Activated T-helper 1 cell treated with anti-CD3 and anti-CD28 coated beads, Interleukin-12 subunit alpha, Interleukin-12 subunit beta, Interleukin-2, Interleukin-4 antibody, amounts not matched to agents 30 ng/mL and 10 ng/mL and 1 ng/mL, durations not matched to agents 14 hours and 24 hours and 36 hours (primary cell): ENCODE measurements at regions of chr3 and their contacts with region 1.

Region 1: DNA sequence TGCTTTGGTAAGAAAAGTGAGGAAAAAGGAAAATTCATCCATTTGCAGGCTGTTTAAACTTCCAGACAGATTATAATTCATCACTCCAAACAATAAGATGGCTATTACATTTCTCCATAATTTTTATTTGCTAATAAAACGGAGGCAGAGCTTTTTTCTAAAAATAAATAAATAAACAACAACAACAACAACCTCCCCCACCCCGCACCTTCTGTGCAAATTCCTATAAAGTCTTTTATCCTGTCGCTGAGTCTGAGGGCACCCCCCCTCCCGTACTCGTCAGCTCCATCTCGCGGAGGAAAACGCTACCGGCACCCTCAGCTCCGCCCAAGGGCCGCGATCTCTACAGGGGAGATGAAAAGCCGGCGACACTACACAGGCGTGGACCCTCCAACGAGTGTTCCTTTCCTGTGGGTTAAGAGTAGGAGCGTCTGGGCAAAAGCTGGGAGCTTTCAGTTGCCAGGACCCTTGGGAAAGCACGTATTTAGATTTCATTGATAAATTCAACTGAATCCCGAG is 1.0 kb upstream of the ATP1B3 start:
- DNase-seq: peak; percentile 78
- H3K4me3 Mint-ChIP-seq: peak overlapping the region; percentile 92
- H3K27ac Mint-ChIP-seq: peak overlapping the region; percentile 90
- H3K4me1 Mint-ChIP-seq: peaks cover 30% of the 10 kb centered on the region
- H3K27me3 Mint-ChIP-seq: peaks cover 2% of the 10 kb centered on the region

Region 2: DNA sequence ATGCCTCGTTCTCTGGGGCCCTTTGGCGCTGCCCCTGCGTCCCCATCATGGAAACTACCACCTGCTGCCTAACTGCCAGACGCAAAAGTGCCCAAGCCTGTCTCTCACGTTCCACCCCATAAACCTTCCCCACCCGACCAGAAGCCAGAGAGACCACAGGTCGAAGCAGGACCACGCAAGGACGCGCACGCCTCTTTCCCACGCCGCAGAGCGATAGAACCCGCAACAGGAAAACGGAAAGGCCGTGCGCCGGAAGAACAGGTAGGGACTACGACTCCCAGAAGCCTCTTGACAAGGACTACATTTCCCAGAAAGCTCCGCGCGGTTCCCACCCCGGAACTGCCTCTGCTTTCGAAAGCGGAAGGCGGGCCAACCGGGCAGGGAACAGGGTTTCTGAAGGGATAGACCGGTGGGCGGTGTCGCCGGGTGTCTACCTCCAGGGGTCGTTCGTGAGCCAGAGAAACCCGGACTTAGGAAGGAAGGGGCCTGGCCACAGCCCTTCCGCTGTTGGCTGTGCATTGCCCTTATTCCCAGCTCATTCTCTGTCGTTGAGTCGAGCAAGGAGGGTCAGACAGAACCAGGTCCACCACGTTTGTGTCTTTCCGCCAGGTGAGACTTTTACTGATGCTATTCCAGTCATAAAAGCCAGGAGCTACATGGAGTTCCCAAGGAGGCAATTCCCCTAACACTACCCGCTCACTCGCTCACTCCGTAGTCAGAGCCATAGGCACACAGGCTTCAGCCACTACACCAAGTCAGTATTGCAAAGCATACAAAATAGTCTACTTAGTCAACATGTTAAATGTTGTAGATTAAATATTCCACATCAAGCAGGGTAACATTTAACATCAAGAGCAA is 563.7 kb before region 1 on chr3:
- intact Hi-C with region 1: loop called (anchors 1 kb)
- DNase-seq: peak; percentile 97
- H3K4me3 Mint-ChIP-seq: peak overlapping the region; percentile 95
- H3K27ac Mint-ChIP-seq: peak overlapping the region; percentile 98
- H3K4me1 Mint-ChIP-seq: peaks cover 51% of the 10 kb centered on the region
- H3K27me3 Mint-ChIP-seq: no peaks in the 10 kb centered on the region

Region 3: GRCh38 chr3:141487521-141488252 is 387.7 kb before region 1 on chr3:
- intact Hi-C with region 1: loop called (anchors 5 kb)
- DNase-seq: peak; percentile 85
- H3K4me3 Mint-ChIP-seq: peak overlapping the region; percentile 93
- H3K27ac Mint-ChIP-seq: peak overlapping the region; percentile 93
- H3K4me1 Mint-ChIP-seq: peaks cover 66% of the 10 kb centered on the region
- H3K27me3 Mint-ChIP-seq: peaks cover 2% of the 10 kb centered on the region

Region 4: GRCh38 chr3:141796081-141796888 is 79.1 kb before region 1 on chr3:
- intact Hi-C with region 1: loop called (anchors 1 kb)
- DNase-seq: peak; percentile 74
- H3K4me3 Mint-ChIP-seq: peak overlapping the region; percentile 79
- H3K27ac Mint-ChIP-seq: peak overlapping the region; percentile 99
- H3K4me1 Mint-ChIP-seq: peaks cover 47% of the 10 kb centered on the region
- H3K27me3 Mint-ChIP-seq: peaks cover 3% of the 10 kb centered on the region

Region 5: DNA sequence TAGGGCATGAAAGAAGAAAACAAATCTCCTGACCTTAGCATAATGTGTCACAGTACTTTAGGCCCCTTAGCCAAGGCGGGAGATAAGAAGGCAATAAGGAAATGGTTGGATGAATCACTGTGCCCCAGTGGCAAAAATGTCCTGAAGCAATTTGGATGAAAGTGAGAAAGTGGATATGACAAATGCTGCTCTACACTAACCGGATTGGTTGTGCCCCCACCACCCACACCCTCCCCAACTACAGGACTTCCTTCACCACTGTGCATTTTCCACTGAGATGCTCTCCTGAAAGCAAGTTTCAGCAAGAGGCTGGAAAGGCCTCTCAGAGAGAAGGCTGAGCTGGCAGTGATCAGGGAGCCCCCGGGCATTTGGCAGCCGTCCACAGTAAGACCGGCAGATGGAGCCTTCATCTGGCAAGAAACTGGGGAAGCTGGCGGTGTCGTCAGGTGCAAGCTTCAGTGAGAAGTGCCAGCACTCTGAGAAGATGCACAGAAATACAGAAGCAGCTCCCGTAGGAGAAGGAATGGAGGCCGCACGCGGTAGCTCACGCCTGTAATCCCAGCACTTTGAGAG is 64.9 kb after region 1 on chr3:
- intact Hi-C with region 1: no loop called
- DNase-seq: no peak
- H3K4me3 Mint-ChIP-seq: no peak overlapping the region
- H3K27ac Mint-ChIP-seq: peak overlapping the region; percentile 40
- H3K4me1 Mint-ChIP-seq: peaks cover 9% of the 10 kb centered on the region
- H3K27me3 Mint-ChIP-seq: no peaks in the 10 kb centered on the region

Region 6: GRCh38 chr3:142148792-142149672 is 273.6 kb after region 1 on chr3 and contains the start of gene TFDP2:
- intact Hi-C with region 1: loop called (anchors 5 kb)
- DNase-seq: peak; percentile 88
- H3K4me3 Mint-ChIP-seq: peak within 1 kb of the TSS; percentile 90
- H3K27ac Mint-ChIP-seq: peak within 1 kb of the TSS; percentile 80
- H3K4me1 Mint-ChIP-seq: peaks cover 18% of the 10 kb centered on the region
- H3K27me3 Mint-ChIP-seq: peaks cover 4% of the 10 kb centered on the region
- total RNA-seq, gene TFDP2: 19.7 and 27.5 TPM in 2 replicates

Region 7: DNA sequence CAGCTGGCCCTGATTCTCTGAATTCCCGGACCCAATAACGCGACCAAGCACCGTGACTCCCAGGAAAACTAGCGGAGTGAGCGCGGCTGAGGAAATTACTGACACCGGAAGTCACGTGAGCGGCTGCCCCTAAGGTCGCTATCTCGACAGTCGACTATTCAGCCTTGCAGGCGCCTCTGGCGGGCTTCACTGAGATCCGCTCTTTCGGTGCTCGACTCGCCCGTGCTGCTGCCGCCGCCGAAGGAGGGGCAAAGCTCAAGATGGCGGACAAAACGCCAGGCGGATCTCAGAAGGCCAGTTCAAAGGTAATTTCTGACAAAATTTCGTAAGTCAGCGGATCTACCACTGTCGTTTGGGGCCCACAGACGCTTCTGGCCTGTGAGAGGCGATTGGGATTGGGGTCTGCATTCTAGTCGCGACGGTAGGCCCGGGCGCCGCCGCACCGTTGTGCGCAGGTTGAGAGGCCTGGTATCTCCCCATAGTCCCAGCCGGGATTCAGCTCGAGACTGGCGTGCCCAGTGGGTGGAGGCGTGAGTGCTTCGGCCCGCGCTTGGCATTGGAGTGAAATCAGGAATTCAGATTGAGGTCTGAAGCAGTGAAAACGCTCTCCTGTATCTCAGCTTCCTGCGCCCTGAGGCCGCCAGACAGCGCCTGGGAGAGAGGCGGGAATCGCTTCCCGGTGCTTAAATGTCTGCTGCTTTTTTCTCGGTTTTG is 1126.1 kb after region 1 on chr3 and contains the start of gene U2SURP:
- intact Hi-C with region 1: loop called (anchors 5 kb)
- DNase-seq: peak; percentile 91
- H3K4me3 Mint-ChIP-seq: peak within 1 kb of the TSS; percentile 95
- H3K27ac Mint-ChIP-seq: peak within 1 kb of the TSS; percentile 96
- H3K4me1 Mint-ChIP-seq: peaks cover 45% of the 10 kb centered on the region
- H3K27me3 Mint-ChIP-seq: peaks cover 6% of the 10 kb centered on the region
- total RNA-seq, gene U2SURP: 186 and 205 TPM in 2 replicates